ENCODE measurements at regions of chr4 and their contacts with region 1.

Region 1: DNA sequence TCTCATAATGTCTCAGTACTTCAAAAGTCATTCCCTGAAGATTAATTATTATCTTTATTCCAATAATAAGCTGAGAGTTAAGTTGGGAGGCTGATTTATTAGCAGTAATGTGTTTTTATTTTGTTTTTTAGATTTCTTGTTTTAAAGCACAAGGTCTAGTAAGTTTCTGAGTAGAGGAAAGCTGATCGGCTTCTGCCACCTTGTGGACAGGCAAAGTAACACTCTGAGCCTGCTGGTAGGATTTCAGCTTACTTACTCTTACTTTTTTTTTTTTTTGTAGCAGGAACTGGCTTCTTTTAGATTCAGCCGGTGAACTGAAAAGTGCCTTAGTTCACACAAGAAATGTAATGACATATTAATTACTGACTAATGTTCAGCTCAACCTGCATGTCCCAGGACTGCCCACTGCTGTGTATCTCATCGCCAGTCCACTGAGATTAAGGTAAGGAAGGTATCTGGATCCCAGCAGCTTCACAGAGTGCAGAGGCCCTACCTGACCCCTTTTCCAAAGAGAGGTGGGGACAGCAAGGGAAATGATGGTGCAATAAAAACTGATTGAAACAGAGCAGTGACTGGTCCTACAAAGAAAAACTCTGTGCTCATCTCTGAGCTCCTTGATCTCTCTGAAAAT is 126.5 kb downstream of the ADGRA3 start:
- DNase-seq: peak in 1 of 3 donors; percentile 30
- ATAC-seq: peak; percentile 76 to 92 (median 82)
- H3K4me3 ChIP-seq: no peak overlapping the region
- H3K27ac ChIP-seq: no peak overlapping the region
- H3K4me1 ChIP-seq: no peaks in the 10 kb centered on the region
- H3K27me3 ChIP-seq: no peaks in the 10 kb centered on the region
- CTCF ChIP-seq: peak; percentile 66 to 78 (median 69)
- POLR2A ChIP-seq: no peak

Region 2: DNA sequence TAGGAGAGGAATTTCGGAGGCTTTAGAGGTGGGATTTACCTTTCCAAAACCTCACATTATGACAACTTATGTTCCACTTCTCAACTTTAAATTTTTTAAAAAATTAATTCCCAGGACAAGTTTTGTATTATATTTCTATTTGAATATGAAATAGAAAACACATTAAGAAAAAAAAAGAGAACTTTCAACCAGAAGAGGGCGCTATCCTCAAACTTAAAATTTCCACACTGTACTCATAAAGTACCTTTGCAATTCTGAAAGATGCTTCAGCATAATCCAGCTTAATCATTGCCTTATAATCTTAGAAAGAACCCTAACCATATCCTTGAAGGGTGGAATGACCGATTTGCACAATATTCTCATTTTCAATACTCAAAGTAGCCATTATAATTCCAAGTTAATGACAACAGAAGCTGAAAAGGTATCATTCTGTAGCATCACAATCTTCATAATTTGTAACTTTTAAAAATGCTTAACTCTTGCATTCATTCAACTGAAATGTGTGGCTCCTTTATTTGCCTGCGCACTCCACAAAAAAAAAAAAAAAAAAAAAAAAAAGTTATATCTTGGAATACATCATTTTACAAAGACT is 598.8 kb before region 1 on chr4:
- intact Hi-C with region 1: loop called in 1 of 2 experiments (anchors 10 kb)
- DNase-seq: no peak
- ATAC-seq: no peak
- H3K4me3 ChIP-seq: no peak overlapping the region
- H3K27ac ChIP-seq: no peak overlapping the region
- H3K4me1 ChIP-seq: no peaks in the 10 kb centered on the region
- H3K27me3 ChIP-seq: no peaks in the 10 kb centered on the region
- CTCF ChIP-seq: peak; percentile 20 to 57 (median 50)
- POLR2A ChIP-seq: no peak

Region 3: GRCh38 chr4:22237155-22237751 is 152.1 kb before region 1 on chr4:
- intact Hi-C with region 1: loop called in 1 of 2 experiments (anchors 10 kb)
- DNase-seq: peak; percentile 70 to 81 (median 72)
- ATAC-seq: peak; percentile 78 to 89 (median 84)
- H3K4me3 ChIP-seq: peak overlapping the region; percentile 29 to 40 (median 35)
- H3K27ac ChIP-seq: peak overlapping the region in 1 of 3 donors; percentile 71
- H3K4me1 ChIP-seq: peaks cover 0 to 5% (median 2%) of the 10 kb centered on the region in 4 donors
- H3K27me3 ChIP-seq: no peaks in the 10 kb centered on the region
- CTCF ChIP-seq: peak; percentile 62 to 77 (median 72)
- POLR2A ChIP-seq: no peak

Region 4: GRCh38 chr4:22334155-22334554 is 55.2 kb before region 1 on chr4:
- intact Hi-C with region 1: no loop called
- DNase-seq: no peak
- ATAC-seq: peak in 1 of 4 donors; percentile 74
- H3K4me3 ChIP-seq: no peak overlapping the region
- H3K27ac ChIP-seq: no peak overlapping the region
- H3K4me1 ChIP-seq: peaks cover 0 to 6% (median 0%) of the 10 kb centered on the region in 4 donors
- H3K27me3 ChIP-seq: no peaks in the 10 kb centered on the region
- CTCF ChIP-seq: no peak
- POLR2A ChIP-seq: no peak

Region 5: DNA sequence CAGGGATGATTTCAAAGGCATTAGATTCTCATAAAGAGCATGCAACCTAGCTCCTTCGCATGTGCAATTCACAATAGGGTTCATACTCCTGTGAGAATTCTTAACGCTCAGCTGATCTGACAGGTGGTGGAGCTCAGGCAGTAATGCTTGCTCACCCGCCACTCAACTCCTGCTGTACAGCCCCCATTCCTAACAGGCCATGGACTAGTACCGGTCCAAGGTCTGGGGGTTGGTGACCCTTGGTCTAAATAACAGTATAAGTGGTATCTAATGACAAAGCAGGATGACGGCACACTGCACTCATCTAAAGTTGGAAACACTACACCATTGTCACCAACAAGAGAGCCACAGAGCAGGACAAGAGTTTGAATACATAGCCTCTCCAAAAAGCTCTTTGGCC is 98.0 kb after region 1 on chr4:
- intact Hi-C with region 1: no loop called
- DNase-seq: no peak
- ATAC-seq: no peak
- H3K4me3 ChIP-seq: no peak overlapping the region
- H3K27ac ChIP-seq: no peak overlapping the region
- H3K4me1 ChIP-seq: peaks cover 0 to 13% (median 2%) of the 10 kb centered on the region in 4 donors
- H3K27me3 ChIP-seq: no peaks in the 10 kb centered on the region
- CTCF ChIP-seq: no peak
- POLR2A ChIP-seq: no peak

Region 6: GRCh38 chr4:22688236-22688635 is 298.9 kb after region 1 on chr4:
- intact Hi-C with region 1: loop called in 1 of 2 experiments (anchors 10 kb)
- DNase-seq: no peak
- ATAC-seq: no peak
- H3K4me3 ChIP-seq: no peak overlapping the region
- H3K27ac ChIP-seq: no peak overlapping the region
- H3K4me1 ChIP-seq: peaks cover 0 to 30% (median 5%) of the 10 kb centered on the region in 4 donors
- H3K27me3 ChIP-seq: no peaks in the 10 kb centered on the region
- CTCF ChIP-seq: no peak
- POLR2A ChIP-seq: no peak

Measured in right lobe of liver (tissue), 6 donors.